Activated CD4-positive, alpha-beta memory T cell treated with anti-CD3 and anti-CD28 coated beads, Interleukin-2, amount 10 ng/mL, durations not matched to agents 7 days and 5 days (primary cell): ENCODE measurements at regions of chr7 and their contacts with region 1.

Region 1: DNA sequence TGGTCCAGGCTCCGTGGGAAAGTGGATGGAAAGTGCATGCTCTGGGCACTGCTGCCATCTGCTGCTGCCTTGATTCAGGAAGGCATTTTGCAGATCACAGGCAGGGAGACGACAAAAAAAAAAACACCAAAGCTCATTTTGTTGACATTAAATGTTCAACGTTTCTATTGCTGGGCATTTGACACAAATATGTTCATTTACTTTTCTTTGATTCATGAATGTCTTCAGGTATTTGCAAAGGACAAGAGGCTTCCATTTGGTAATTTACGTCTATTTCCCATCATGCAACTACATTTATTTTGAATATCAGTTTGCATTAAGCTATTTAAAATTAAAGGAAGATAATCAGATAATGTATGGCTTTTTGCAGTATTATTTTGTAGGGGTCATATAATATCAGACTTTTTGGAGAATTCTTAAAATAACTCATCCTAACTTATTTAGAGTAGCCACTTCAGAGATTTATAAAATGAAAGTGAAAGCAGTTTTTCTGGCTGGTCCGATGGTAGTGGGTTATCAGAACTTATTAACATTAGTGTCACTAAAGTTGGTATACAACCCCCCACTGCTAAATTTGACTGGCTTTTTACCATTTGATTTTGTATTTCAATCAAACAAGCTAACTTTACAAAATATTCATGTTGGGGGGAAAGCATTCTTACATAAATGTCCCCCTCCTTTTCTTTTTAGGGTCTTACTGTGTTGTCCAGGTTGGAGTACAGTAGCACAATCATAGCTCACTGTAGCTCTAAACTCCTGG is 65.3 kb downstream of the PDIA4 start:
- DNase-seq: peak; percentile 72
- H3K4me3 Mint-ChIP-seq: peak overlapping the region; percentile 85
- H3K27ac Mint-ChIP-seq: peak overlapping the region; percentile 74
- H3K4me1 Mint-ChIP-seq: peaks cover 28% of the 10 kb centered on the region
- H3K27me3 Mint-ChIP-seq: peaks cover 3% of the 10 kb centered on the region

Region 2: GRCh38 chr7:148262721-148263229 is 700.2 kb before region 1 on chr7:
- CTCF ChIA-PET with region 1: interaction called, 12 read pairs
- POLR2A ChIA-PET with region 1: no interaction called
- DNase-seq: peak; percentile 55
- H3K4me3 Mint-ChIP-seq: no peak overlapping the region
- H3K27ac Mint-ChIP-seq: no peak overlapping the region
- H3K4me1 Mint-ChIP-seq: peaks cover 1% of the 10 kb centered on the region
- H3K27me3 Mint-ChIP-seq: peaks cover 9% of the 10 kb centered on the region

Region 3: DNA sequence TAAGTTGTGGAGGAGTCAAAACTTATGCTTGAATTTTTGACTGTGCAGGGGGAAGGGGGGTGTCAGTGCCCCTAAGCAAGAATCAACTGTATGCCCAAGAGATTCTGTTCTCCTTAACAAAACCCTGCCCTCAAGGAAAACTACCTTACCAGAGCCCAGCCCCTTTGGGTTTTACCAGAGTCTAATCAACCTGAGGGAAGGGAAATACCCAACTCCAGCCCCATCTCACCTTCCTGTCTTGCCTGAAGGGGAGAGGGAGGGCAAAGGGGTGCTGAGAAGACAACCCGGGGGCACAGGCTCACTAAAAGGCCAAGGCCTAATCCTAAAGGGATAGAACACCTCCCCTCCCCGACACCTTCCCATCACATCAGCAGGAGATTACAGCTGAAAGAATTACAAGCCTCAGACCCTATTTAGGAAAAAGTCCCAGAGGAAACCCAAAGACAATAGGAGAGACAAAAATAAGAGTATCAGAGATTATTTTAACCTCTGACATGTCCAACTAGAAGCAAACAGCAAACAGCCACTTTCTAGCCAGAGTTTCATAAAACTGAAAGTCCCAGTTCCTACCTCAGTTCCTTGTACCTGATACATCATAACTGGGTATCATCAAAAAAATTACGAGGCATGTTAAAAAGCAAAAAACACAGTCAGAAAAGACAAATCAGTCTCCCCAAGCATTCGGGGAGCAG is 399.3 kb before region 1 on chr7:
- CTCF ChIA-PET with region 1: interaction called, 11 read pairs
- POLR2A ChIA-PET with region 1: interaction called, 3 read pairs
- DNase-seq: no peak
- H3K4me3 Mint-ChIP-seq: peak overlapping the region; percentile 29
- H3K27ac Mint-ChIP-seq: peak overlapping the region; percentile 89
- H3K4me1 Mint-ChIP-seq: peaks cover 28% of the 10 kb centered on the region
- H3K27me3 Mint-ChIP-seq: peaks cover 12% of the 10 kb centered on the region

Region 4: GRCh38 chr7:148856891-148857290 is 106.1 kb before region 1 on chr7:
- CTCF ChIA-PET with region 1: interaction called, 20 read pairs
- POLR2A ChIA-PET with region 1: no interaction called
- DNase-seq: peak; percentile 23
- H3K4me3 Mint-ChIP-seq: no peak overlapping the region
- H3K27ac Mint-ChIP-seq: peak overlapping the region; percentile 56
- H3K4me1 Mint-ChIP-seq: peaks cover 46% of the 10 kb centered on the region
- H3K27me3 Mint-ChIP-seq: no peaks in the 10 kb centered on the region

Region 5: GRCh38 chr7:149090397-149091195 is 127.6 kb after region 1 on chr7 and contains the start of gene ZNF786:
- CTCF ChIA-PET with region 1: no interaction called
- POLR2A ChIA-PET with region 1: no interaction called
- DNase-seq: peak; percentile 90
- H3K4me3 Mint-ChIP-seq: peak within 1 kb of the TSS; percentile 97
- H3K27ac Mint-ChIP-seq: peak within 1 kb of the TSS; percentile 98
- H3K4me1 Mint-ChIP-seq: peaks cover 20% of the 10 kb centered on the region
- H3K27me3 Mint-ChIP-seq: no peaks in the 10 kb centered on the region
- total RNA-seq, gene ZNF786: 6.0 to 7.0 TPM